Activated B cell treated with CpG ODN at 0.5 μM for 24 hours (primary cell): ENCODE measurements at regions of chr9 and their contacts with region 1.

Region 1: DNA sequence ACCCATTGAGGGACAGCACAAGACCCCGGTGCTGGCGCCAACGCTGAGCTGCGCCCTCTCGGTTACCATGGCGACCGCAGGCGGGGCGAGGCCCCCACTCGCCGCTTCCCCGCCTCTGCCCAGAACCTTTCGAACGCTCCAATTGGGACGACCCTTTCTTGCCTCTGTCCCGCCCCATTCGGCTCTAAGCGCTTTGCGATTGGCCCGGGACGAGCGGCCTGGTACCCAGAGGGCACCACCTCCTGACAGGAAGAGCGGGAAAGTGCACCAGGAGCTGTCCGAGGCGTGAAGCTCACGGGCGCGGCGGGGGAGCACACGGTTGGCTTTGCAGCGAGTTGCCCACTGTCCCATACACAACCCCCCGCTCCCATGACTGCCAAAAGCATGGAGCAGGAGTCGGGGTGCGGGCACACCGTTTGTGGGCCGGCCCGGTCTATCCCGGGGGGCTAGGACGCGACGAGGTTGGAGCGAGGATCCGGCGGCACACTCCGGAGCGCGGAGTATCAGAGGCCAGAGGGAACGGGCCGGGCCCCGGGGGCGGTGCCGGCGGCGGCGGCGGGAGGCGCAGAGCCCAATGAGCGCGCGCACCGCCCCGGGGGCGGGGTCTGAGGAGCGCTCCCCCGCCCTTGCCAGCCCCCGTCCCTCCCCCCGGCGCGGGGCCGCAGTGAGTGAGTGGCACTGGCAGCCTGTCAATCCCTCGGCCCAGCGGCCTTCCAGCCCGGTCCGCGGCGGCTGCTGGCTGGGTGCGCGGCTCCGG is 978 bp upstream of the PBX3 start:
- DNase-seq: peak; percentile 94
- ATAC-seq: peak; percentile 82
- H3K4me3 Mint-ChIP-seq: peak overlapping the region; percentile 92
- H3K27ac Mint-ChIP-seq: peak overlapping the region; percentile 92
- H3K4me1 Mint-ChIP-seq: peaks cover 34% of the 10 kb centered on the region
- H3K27me3 Mint-ChIP-seq: peaks cover 2% of the 10 kb centered on the region
- CTCF ChIP-seq: no peak

Region 2: GRCh38 chr9:124861342-124862229 is 884.6 kb before region 1 on chr9 and contains the starts of genes ARPC5L and RPL35:
- CTCF ChIA-PET with region 1: no interaction called
- POLR2A ChIA-PET with region 1: no interaction called
- intact Hi-C with region 1: loop called (anchors 5 kb)
- DNase-seq: peak; percentile 92
- ATAC-seq: peak; percentile 95
- H3K4me3 Mint-ChIP-seq: peak within 1 kb of the TSS; percentile 95
- H3K27ac Mint-ChIP-seq: peak within 1 kb of the TSS; percentile 94
- H3K4me1 Mint-ChIP-seq: peaks cover 47% of the 10 kb centered on the region
- H3K27me3 Mint-ChIP-seq: no peaks in the 10 kb centered on the region
- CTCF ChIP-seq: no peak
- total RNA-seq, gene ARPC5L: 91.5 and 93.1 TPM in 2 replicates
- total RNA-seq, gene RPL35: 2,037 and 2,426 TPM in 2 replicates

Region 3: GRCh38 chr9:125261501-125262293 is 484.5 kb before region 1 on chr9 and contains the start of gene GAPVD1:
- CTCF ChIA-PET with region 1: no interaction called
- POLR2A ChIA-PET with region 1: no interaction called
- intact Hi-C with region 1: loop called (anchors 5 kb)
- DNase-seq: peak; percentile 97
- ATAC-seq: peak; percentile 93
- H3K4me3 Mint-ChIP-seq: peak within 1 kb of the TSS; percentile 96
- H3K27ac Mint-ChIP-seq: peak within 1 kb of the TSS; percentile 99
- H3K4me1 Mint-ChIP-seq: peaks cover 48% of the 10 kb centered on the region
- H3K27me3 Mint-ChIP-seq: peaks cover 2% of the 10 kb centered on the region
- CTCF ChIP-seq: no peak
- total RNA-seq, gene GAPVD1: 46.6 and 53.9 TPM in 2 replicates

Region 4: GRCh38 chr9:125558453-125559092 is 187.6 kb before region 1 on chr9:
- CTCF ChIA-PET with region 1: interaction called, 6 read pairs
- POLR2A ChIA-PET with region 1: no interaction called
- intact Hi-C with region 1: loop called (anchors 2 kb)
- DNase-seq: no peak
- ATAC-seq: peak; percentile 83
- H3K4me3 Mint-ChIP-seq: no peak overlapping the region
- H3K27ac Mint-ChIP-seq: no peak overlapping the region
- H3K4me1 Mint-ChIP-seq: peaks cover 26% of the 10 kb centered on the region
- H3K27me3 Mint-ChIP-seq: no peaks in the 10 kb centered on the region
- CTCF ChIP-seq: no peak

Region 5: DNA sequence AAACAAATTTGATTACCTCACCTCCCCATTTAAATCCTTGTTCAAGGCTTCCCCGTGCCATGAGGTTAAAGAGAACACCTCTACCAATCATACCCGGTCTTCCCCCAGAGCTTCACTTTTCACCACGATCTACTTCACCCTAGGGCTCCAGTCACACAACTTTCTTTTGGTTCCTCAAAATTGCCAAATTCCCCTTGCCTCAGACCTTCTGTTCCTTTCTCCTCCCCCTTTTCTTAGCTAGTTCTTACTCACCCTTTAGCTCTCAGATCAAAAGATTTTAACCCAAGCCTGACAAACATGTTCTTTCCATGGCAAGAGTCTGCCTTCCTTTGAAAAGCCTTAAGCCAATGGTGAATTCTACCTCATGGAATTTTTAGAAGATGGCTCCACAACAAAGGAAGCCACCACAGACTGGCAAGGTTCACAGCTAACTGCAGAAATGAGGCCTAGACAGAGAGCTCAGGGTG is 95.9 kb before region 1 on chr9:
- CTCF ChIA-PET with region 1: no interaction called
- POLR2A ChIA-PET with region 1: interaction called, 8 read pairs
- intact Hi-C with region 1: loop called (anchors 1 kb)
- DNase-seq: no peak
- ATAC-seq: peak; percentile 93
- H3K4me3 Mint-ChIP-seq: peak overlapping the region; percentile 59
- H3K27ac Mint-ChIP-seq: peak overlapping the region; percentile 86
- H3K4me1 Mint-ChIP-seq: peaks cover 86% of the 10 kb centered on the region
- H3K27me3 Mint-ChIP-seq: no peaks in the 10 kb centered on the region
- CTCF ChIP-seq: no peak

Region 6: DNA sequence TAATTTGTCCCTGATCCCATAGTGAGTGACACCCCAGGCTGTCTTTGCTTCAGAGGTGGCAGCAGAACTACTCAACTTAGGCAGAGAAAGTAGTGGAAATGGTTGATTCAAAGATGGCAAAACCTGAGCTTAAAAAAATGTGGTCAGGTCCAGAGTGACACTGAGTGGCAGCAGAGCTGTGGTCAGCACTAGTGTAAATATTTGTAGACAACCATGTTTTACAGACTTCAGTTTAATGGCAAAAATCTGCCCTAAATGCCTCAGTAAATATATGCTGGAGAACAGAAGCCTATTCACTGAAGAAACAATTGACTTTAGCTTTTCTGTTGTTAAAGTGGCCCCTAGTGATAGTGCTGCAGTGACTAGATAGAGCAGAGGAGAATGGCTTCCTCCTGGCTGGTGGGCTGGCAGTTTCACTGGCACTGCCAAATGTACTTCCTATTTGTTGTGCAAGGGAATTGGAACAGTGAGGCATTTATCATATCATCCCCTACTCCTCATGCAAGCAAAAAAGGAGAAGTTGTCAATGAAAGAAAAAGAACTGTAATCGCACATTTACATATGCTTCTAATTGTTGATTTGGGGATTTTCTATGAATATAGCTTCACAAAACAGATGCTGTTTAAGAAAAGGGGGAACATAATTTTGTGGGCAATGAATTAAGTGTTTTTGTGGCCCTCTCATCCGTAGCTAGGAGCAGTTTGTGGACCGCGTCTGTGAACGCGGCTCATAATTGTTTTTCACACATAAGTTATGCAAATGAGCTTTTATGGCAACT is 13.0 kb after region 1 on chr9:
- CTCF ChIA-PET with region 1: interaction called, 3 read pairs
- POLR2A ChIA-PET with region 1: interaction called, 20 read pairs
- intact Hi-C with region 1: loop called (anchors 1 kb)
- DNase-seq: no peak
- ATAC-seq: peak; percentile 89
- H3K4me3 Mint-ChIP-seq: peak overlapping the region; percentile 78
- H3K27ac Mint-ChIP-seq: peak overlapping the region; percentile 77
- H3K4me1 Mint-ChIP-seq: peaks cover 34% of the 10 kb centered on the region
- H3K27me3 Mint-ChIP-seq: no peaks in the 10 kb centered on the region
- CTCF ChIP-seq: no peak

Region 7: GRCh38 chr9:125889476-125890419 is 143.6 kb after region 1 on chr9:
- CTCF ChIA-PET with region 1: no interaction called
- POLR2A ChIA-PET with region 1: interaction called, 3 read pairs
- intact Hi-C with region 1: loop called (anchors 5 kb)
- DNase-seq: peak; percentile 54
- ATAC-seq: peak; percentile 88
- H3K4me3 Mint-ChIP-seq: peak overlapping the region; percentile 87
- H3K27ac Mint-ChIP-seq: no peak overlapping the region
- H3K4me1 Mint-ChIP-seq: peaks cover 23% of the 10 kb centered on the region
- H3K27me3 Mint-ChIP-seq: no peaks in the 10 kb centered on the region
- CTCF ChIP-seq: no peak